AG04450 (cell line): ENCODE measurements at regions of chr7 and their contacts with region 1.

Region 1: DNA sequence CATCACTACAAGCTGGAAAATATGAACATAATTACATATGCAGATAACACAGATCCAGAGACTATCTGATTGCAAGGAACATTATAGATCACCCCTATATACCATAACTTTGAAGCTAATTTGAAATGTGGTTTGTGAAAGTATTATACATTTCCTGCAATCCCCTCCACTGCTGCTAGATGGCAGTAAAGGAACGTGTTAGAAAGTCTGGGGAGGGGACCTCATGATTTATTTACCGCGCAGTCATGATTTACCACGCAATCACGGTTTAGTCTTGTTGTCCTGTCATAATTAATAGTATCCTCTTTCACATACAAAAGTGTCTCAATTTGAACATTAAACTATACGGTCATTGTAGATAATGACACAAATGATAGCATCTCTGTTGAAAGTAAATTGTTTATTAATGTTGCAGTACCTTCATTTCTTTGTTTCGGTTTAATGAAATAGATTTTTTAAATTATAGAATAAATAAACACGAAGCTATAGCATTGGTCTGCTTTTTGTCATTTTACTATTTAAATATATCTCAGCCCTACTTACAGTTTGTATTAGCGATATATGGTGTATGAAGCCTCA is 145.3 kb upstream of the PRSS1 start:
- DNase-seq: no peak
- H3K4me3 ChIP-seq: no peak overlapping the region; the same call in 1 of the 2 replicates
- H3K27ac ChIP-seq: no peak overlapping the region
- H3K27me3 ChIP-seq: peaks cover 2% of the 10 kb centered on the region
- CTCF ChIP-seq: peak; percentile 87

Region 2: GRCh38 chr7:142618655-142619351 is 14.8 kb after region 1 on chr7:
- CTCF ChIA-PET with region 1: interaction called, 12 read pairs
- POLR2A ChIA-PET with region 1: no interaction called
- DNase-seq: no peak
- H3K4me3 ChIP-seq: no peak overlapping the region
- H3K27ac ChIP-seq: no peak overlapping the region
- H3K27me3 ChIP-seq: peaks cover 9% of the 10 kb centered on the region
- CTCF ChIP-seq: no peak